Dorsolateral prefrontal cortex (tissue), 120 donors: ENCODE measurements at regions of chr17 and their contacts with region 1.

Region 1: GRCh38 chr17:82648166-82648668 is at the start of gene WDR45B:
- DNase-seq: peak; percentile 88 to 98 (median 95)
- H3K4me3 ChIP-seq: peak within 1 kb of the TSS; percentile 62 to 100 (median 97)
- H3K27ac ChIP-seq: peak within 1 kb of the TSS; percentile 55 to 99 (median 94)
- H3K27me3 ChIP-seq: no peaks in the 10 kb centered on the region
- CTCF ChIP-seq: peak in 2 of 56 donors; percentile 10 to 13
- total RNA-seq, gene WDR45B: 61.0 to 110 (median 83.4) TPM

Region 2: GRCh38 chr17:82429824-82430223 is 218.4 kb before region 1 on chr17:
- intact Hi-C with region 1: loop called in 1 of 2 experiments (anchors 5 kb)
- DNase-seq: no peak
- H3K4me3 ChIP-seq: no peak overlapping the region
- H3K27ac ChIP-seq: no peak overlapping the region
- H3K27me3 ChIP-seq: no peaks in the 10 kb centered on the region
- CTCF ChIP-seq: no peak

Region 3: GRCh38 chr17:82592767-82593589 is 55.2 kb before region 1 on chr17:
- intact Hi-C with region 1: loop called (anchors 2 to 5 kb)
- DNase-seq: peak in 9 of 10 donors; percentile 71 to 93 (median 83)
- H3K4me3 ChIP-seq: peak overlapping the region; percentile 46 to 96 (median 74)
- H3K27ac ChIP-seq: peak overlapping the region; percentile 95 to 100 (median 100)
- H3K27me3 ChIP-seq: no peaks in the 10 kb centered on the region
- CTCF ChIP-seq: peak in 4 of 56 donors; percentile 8 to 21 (median 10)

Region 4: GRCh38 chr17:82698065-82698973 is 50.1 kb after region 1 on chr17 and contains the start of gene RAB40B:
- intact Hi-C with region 1: loop called in 1 of 2 experiments (anchors 5 kb)
- DNase-seq: peak; percentile 99 to 100 (median 100)
- H3K4me3 ChIP-seq: peak within 1 kb of the TSS; percentile 60 to 96 (median 87)
- H3K27ac ChIP-seq: peak within 1 kb of the TSS in 58 of 59 donors; percentile 51 to 97 (median 86)
- H3K27me3 ChIP-seq: no peaks in the 10 kb centered on the region
- CTCF ChIP-seq: peak in 7 of 56 donors; percentile 1 to 22 (median 10)
- total RNA-seq, gene RAB40B: 61.9 to 320 (median 103) TPM

Region 5: DNA sequence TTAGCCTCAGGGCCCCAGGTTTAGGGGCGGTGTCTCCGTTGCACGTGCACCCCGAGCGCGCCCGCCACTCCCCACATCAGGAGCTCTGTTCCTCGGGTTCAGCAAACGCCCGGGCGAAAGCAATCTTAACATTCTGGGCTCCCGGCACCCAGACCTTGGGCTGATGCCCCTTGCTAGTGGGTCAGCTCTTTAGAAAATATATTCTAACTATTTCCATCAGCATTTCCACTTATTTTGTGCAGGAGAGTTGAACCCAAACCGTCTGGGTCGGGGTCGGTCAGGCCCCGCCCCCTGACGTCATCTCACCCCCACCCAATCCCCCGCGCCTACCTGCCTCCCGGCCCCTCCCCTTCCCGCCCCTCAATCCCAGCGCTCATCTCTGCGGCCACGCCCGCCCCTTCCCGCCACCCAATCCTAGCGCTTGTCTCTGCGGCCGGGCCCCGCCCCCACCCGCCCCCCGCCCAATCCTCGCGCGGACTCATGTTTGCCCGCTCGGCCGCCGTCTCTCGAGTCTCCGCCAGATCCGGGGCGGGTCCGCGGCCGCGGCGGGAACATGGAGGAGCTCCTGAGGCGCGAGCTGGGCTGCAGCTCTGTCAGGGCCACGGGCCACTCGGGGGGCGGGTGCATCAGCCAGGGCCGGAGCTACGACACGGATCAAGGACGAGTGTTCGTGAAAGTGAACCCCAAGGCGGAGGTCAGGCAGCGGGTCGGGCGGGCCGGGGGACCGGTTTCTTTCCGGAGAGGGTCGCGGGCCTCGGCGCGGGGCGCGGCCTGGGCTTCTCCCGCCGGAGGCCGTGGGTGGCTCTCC is 68.2 kb after region 1 on chr17 and contains the start of gene FN3KRP:
- intact Hi-C with region 1: no loop called
- DNase-seq: peak; percentile 78 to 95 (median 91)
- H3K4me3 ChIP-seq: peak within 1 kb of the TSS; percentile 69 to 98 (median 92)
- H3K27ac ChIP-seq: peak within 1 kb of the TSS in 47 of 59 donors; percentile 17 to 89 (median 72)
- H3K27me3 ChIP-seq: no peaks in the 10 kb centered on the region
- CTCF ChIP-seq: peak in 6 of 56 donors; percentile 7 to 19 (median 14)
- total RNA-seq, gene FN3KRP: 32.3 to 70.7 (median 49.0) TPM

Region 6: DNA sequence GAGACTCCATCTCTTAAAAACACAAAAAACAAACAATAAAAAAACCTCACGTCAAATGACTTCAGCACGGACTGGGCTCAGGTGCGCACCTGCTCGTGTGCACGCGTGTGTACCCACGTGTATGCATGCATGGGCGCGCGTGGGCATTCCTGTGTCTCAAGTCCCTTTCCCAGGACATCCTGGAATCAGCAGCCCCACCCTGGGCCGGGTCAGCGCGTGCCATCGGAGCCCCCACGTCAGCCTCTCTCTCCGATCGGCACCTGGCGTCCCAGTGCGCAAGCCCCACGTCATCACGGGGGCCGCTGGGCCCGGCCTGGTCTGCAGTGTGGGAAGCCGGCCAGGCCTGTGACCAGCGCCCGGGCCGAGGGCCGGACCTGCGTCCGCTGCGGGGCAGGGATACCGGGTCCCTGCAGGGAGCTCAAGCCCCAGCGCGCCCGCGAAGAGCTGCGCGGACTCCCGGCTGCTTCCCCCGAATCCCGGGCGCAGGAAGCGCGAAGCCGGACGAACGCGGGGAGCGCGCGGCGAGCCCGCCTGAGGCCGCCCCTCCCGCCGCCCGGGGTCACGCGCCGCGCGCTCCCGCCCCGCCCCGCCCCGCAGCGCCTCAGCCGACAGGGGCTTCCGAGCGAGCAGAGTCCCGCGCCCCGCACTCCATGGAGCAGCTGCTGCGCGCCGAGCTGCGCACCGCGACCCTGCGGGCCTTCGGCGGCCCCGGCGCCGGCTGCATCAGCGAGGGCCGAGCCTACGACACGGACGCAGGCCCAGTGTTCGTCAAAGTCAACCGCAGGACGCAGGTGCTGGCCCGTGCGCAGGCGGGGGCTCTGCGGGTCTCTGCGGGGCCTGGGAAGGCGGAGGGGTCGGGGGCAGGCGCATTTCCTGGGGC is 87.0 kb after region 1 on chr17 and contains the start of gene FN3K:
- intact Hi-C with region 1: loop called in 1 of 2 experiments (anchors 5 kb)
- DNase-seq: peak; percentile 56 to 82 (median 73)
- H3K4me3 ChIP-seq: peak within 1 kb of the TSS; percentile 65 to 90 (median 83)
- H3K27ac ChIP-seq: peak within 1 kb of the TSS; percentile 79 to 99 (median 96)
- H3K27me3 ChIP-seq: no peaks in the 10 kb centered on the region
- CTCF ChIP-seq: peak in 4 of 56 donors; percentile 15 to 30 (median 16)
- total RNA-seq, gene FN3K: 62.5 to 210 (median 123) TPM